WTC11 (cell line): ENCODE measurements at regions of chr2 and their contacts with region 1.

Region 1: DNA sequence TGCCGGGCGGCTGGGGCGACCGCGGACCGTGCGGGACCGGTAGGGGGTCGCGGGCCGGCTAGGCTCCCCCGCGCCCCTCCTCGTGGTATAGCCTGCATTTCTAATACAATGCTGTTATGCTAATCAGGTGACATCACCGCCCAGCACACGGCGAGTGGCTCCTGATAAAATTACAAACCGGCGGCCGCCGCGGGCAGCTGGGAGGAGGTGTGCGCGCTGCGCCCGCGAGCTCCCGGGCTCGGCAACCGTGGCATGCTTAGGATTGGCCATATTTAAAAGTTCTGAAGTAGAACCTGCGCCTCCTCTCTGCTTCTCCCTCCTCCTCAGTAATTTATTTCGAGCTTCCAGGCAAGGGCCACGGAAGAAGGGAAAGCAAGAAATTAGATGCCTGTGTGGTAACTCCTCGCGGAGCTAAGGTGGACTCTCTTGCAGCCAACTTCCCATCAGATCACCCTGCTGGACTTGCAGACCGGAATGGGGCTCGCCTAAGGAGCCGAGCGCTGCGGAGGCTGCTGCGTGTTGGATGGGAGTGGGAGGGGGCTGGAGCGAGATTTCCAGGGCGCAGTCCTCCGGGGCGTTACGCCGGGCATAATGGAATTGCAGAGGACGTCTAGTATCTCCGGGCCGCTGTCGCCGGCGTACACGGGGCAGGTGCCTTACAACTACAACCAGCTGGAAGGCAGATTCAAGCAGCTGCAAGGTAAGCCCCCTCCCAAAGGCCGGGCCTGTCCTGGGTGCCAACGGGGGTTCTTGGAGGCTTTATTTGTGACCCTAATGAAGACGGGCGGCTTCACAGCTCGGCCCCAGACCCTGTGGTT is 102.3 kb downstream of the SPTBN1 start:
- DNase-seq: peak; percentile 82
- ATAC-seq: peak; percentile 60
- H3K4me3 Mint-ChIP-seq: peak overlapping the region; percentile 91
- H3K27ac Mint-ChIP-seq: peak overlapping the region; percentile 95
- H3K4me1 Mint-ChIP-seq: peaks cover 43% of the 10 kb centered on the region
- H3K27me3 Mint-ChIP-seq: no peaks in the 10 kb centered on the region
- CTCF ChIP-seq: no peak

Region 2: GRCh38 chr2:54508541-54508940 is 49.9 kb before region 1 on chr2:
- CTCF ChIA-PET with region 1: no interaction called
- POLR2A ChIA-PET with region 1: no interaction called
- DNase-seq: no peak
- ATAC-seq: no peak
- H3K4me3 Mint-ChIP-seq: no peak overlapping the region
- H3K27ac Mint-ChIP-seq: no peak overlapping the region
- H3K4me1 Mint-ChIP-seq: peaks cover 30% of the 10 kb centered on the region
- H3K27me3 Mint-ChIP-seq: no peaks in the 10 kb centered on the region
- CTCF ChIP-seq: no peak

Region 3: GRCh38 chr2:54522624-54523281 is 35.6 kb before region 1 on chr2:
- CTCF ChIA-PET with region 1: interaction called, 17 read pairs
- POLR2A ChIA-PET with region 1: interaction called, 4 read pairs
- DNase-seq: peak; percentile 75
- ATAC-seq: peak; percentile 96
- H3K4me3 Mint-ChIP-seq: no peak overlapping the region
- H3K27ac Mint-ChIP-seq: no peak overlapping the region
- H3K4me1 Mint-ChIP-seq: peaks cover 52% of the 10 kb centered on the region
- H3K27me3 Mint-ChIP-seq: no peaks in the 10 kb centered on the region
- CTCF ChIP-seq: peak; percentile 48